Posterior vena cava (tissue), 2 donors: ENCODE measurements at regions of chr11 and their contacts with region 1.

Region 1: DNA sequence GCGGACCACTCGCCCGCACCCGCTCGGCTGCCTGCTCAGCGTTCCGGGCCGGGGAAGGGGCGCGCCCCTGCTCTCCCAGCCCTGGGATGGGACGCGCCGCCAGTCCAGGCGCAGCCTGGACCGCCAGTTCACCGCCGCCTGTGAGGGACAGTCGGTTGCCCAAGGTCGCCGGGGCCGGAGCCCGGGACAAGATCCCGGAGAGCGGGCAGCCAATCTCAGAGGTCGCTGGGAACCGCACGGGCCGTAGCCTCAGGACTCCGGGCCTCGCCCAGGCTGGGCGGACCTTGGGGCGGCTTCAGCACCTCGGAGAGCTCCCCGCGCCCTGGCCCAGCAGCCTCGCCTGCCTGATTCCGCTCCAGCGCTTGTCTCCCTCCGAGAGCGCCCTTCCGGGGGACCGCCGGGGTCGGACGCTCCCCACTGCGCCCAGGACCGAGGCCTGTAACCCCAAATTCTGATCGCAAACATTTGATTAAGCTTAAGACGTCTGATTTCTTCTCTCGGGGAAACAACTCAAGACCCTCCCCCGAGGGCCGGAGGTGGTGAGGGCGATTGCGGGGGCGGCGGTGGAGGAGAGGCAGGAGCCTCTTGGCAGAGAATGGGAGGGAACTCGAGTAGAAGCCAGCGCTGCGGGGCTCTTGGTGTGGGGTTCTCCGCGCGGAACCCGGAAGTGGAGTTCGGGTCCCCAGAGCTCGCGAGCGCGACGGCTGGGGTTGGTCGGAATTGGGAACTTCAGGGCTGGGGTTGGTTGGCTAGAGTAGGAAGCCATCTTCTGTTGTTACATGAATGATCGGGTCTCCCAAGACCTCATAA is 1.1 kb upstream of the CHRM4 start:
- DNase-seq: peak; percentile 96

Region 2: GRCh38 chr11:46367244-46367915 is 25.2 kb before region 1 on chr11:
- intact Hi-C with region 1: no loop called
- DNase-seq: no peak

Region 3: GRCh38 chr11:46529095-46529905 is 136.7 kb after region 1 on chr11:
- intact Hi-C with region 1: loop called (anchors 2 to 10 kb)
- DNase-seq: peak; percentile 81

Region 4: GRCh38 chr11:46534711-46535110 is 142.1 kb after region 1 on chr11:
- intact Hi-C with region 1: loop called (anchors 2 to 10 kb)
- DNase-seq: no peak